ENCODE measurements at regions of chr14 and their contacts with region 1.

Region 1: GRCh38 chr14:75660630-75661494 is at the starts of genes ERG28 and TTLL5:
- DNase-seq: peak; percentile 98
- H3K4me3 ChIP-seq: peak within 1 kb of the TSS; percentile 84 to 99 (median 97)
- H3K27ac ChIP-seq: peak within 1 kb of the TSS; percentile 71
- H3K4me1 ChIP-seq: peaks cover 36% of the 10 kb centered on the region
- H3K27me3 ChIP-seq: no peaks in the 10 kb centered on the region
- CTCF ChIP-seq: no peak
- POLR2A ChIP-seq: no peak
- total RNA-seq, gene ERG28: 31.4 and 31.9 TPM in 2 replicates
- total RNA-seq, gene TTLL5: 70.0 and 93.6 TPM in 2 replicates

Region 2: GRCh38 chr14:75514673-75515628 is 145.9 kb before region 1 on chr14:
- CTCF ChIA-PET with region 1: no interaction called
- POLR2A ChIA-PET with region 1: no interaction called
- dilution Hi-C with region 1: no loop called
- intact Hi-C with region 1: no loop called
- DNase-seq: peak; percentile 17
- H3K4me3 ChIP-seq: peak overlapping the region in 2 of 3 experiments; percentile 28 to 29
- H3K27ac ChIP-seq: no peak overlapping the region
- H3K4me1 ChIP-seq: no peaks in the 10 kb centered on the region
- H3K27me3 ChIP-seq: no peaks in the 10 kb centered on the region
- CTCF ChIP-seq: peak in 1 of 2 donors; percentile 19
- POLR2A ChIP-seq: no peak

Region 3: GRCh38 chr14:75577729-75578101 is 83.1 kb before region 1 on chr14:
- CTCF ChIA-PET with region 1: interaction called, 309 read pairs
- POLR2A ChIA-PET with region 1: interaction called, 3 read pairs
- dilution Hi-C with region 1: no loop called
- intact Hi-C with region 1: no loop called
- DNase-seq: peak; percentile 82
- H3K4me3 ChIP-seq: peak overlapping the region; percentile 50 to 83 (median 64)
- H3K27ac ChIP-seq: no peak overlapping the region
- H3K4me1 ChIP-seq: peaks cover 18% of the 10 kb centered on the region
- H3K27me3 ChIP-seq: peaks cover 0 to 4% of the 10 kb centered on the region in 2 experiments
- CTCF ChIP-seq: peak; percentile 70 to 83
- POLR2A ChIP-seq: no peak

Region 4: GRCh38 chr14:75697386-75697785 is 36.5 kb after region 1 on chr14:
- CTCF ChIA-PET with region 1: no interaction called
- POLR2A ChIA-PET with region 1: no interaction called
- dilution Hi-C with region 1: no loop called
- intact Hi-C with region 1: no loop called
- DNase-seq: no peak
- H3K4me3 ChIP-seq: no peak overlapping the region
- H3K27ac ChIP-seq: no peak overlapping the region
- H3K4me1 ChIP-seq: no peaks in the 10 kb centered on the region
- H3K27me3 ChIP-seq: no peaks in the 10 kb centered on the region
- CTCF ChIP-seq: no peak
- POLR2A ChIP-seq: no peak

Region 5: DNA sequence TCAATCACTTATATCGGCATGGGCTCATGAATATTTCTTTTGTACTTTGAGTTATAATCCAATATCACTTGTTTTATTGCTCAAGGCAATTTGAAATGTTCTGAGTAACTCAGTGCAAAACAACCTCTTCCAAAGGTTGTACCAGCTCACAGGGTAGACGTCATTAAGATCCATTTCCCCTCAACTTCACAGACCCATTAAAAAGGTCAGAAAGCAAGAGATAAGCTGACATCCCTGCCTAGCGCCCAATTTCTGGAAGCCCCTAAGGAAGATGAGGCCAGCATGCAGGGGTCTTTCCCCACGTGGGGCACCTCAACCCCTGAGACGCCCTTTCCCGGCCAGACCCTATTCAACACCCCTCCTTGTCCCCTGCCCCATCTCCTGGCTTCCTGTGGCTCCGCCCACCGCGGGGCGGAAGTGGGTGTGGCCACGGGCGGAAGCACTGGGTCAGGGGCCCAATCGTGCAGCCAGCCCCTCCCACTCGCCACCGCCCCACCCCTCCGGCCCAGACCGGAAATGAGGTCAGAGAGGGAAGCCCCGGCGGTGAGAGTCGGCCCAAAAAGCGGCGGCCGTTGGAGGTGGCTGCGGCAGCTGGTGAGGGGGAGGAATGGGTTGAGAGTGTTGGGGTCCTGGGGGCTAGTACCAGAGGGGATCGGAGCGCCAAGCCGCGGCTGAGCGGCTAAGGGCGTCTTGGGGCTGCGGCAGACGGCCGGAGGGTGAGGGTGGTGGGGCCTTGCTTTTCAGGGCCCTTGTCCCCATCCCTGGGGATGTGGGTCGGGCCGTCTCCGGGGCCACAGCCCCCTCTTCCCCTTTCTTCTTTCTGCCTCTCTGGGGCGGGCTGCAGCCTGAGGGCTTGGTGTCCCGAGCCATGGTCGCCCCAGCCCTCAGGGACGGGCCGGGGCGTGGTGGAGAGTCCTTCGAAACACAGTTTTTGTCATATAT is 490.8 kb after region 1 on chr14 and contains the start of gene GPATCH2L:
- CTCF ChIA-PET with region 1: no interaction called
- POLR2A ChIA-PET with region 1: no interaction called
- dilution Hi-C with region 1: no loop called
- intact Hi-C with region 1: loop called (anchors 5 kb)
- DNase-seq: peak; percentile 86
- H3K4me3 ChIP-seq: peak within 1 kb of the TSS; percentile 66 to 89 (median 81)
- H3K27ac ChIP-seq: peak within 1 kb of the TSS; percentile 88
- H3K4me1 ChIP-seq: peaks cover 34% of the 10 kb centered on the region
- H3K27me3 ChIP-seq: peaks cover 8 to 11% of the 10 kb centered on the region in 2 experiments
- CTCF ChIP-seq: no peak
- POLR2A ChIP-seq: peak; percentile 83
- total RNA-seq, gene GPATCH2L: 40.0 and 47.4 TPM in 2 replicates

Measured in endothelial cell of umbilical vein (primary cell).